ENCODE measurements at regions of chr19 and their contacts with region 1.

Region 1: DNA sequence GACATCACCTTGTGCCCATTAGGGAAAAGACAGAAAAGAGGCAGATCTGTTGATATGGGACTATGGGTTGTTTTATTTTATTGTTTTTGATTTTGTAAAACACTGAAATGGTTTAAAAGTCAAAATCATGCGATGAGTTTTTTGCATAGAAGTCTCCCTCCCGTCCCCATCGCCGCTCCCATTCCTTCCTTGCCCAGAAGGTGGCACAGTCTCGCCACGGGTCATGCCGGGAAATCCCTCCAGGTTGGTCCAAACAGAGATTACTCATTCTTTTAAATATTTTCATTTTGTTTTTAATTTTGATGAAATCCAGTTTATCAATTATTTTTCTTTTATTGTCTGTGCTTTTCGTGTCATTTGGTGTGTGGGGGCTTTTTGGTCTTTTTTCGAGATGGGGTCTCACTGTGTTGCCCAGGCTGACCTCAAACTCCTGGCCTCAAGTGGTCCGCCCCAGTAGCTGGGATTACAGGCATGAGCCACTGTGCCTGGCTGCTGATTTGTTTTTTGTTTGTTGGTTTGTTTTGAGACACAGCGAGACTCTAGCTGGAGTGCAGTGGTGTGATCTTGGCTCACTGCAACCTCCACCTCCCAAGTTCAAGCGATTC is 9.2 kb downstream of the PGPEP1 start:
- DNase-seq: peak; percentile 39
- H3K4me3 ChIP-seq: no peak overlapping the region
- H3K27ac ChIP-seq: no peak overlapping the region
- H3K4me1 ChIP-seq: peaks cover 10% of the 10 kb centered on the region
- H3K27me3 ChIP-seq: no peaks in the 10 kb centered on the region
- CTCF ChIP-seq: peak; percentile 93 to 95

Region 2: DNA sequence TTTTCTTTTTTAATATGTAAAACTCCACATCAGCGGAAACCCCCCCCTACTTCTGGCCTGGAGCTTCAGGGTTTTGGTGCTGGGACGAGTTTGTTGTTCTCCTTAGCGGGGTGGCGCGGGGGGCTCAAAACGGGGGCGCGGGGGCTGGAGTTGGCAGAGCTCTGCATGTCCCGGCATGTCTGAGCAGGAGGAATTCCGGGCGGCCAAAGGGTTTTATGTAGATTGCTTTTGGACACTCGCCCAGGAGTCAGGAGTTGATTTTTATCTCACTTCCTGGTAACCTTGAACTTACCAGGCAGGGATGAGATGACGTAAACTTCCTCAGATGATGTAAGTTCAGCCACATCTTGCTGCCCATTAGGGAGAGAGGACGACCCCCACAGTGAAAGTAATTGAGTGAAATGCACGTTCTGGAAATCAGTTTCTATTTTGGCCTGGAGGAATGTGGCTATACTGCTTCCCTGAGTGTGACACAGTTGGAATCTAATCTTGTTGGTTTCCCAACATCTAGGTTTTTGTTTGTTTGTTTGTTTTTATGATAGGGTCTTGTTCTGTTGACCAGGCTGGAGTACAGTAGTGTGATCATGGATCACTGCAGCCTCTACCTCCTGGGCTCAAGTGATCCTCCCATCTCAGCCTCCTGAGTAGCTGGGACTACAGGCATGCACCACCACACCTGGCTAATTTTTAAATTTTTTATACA is 15.4 kb after region 1 on chr19:
- CTCF ChIA-PET with region 1: no interaction called
- dilution Hi-C with region 1: no loop called
- in situ Hi-C with region 1: no loop called
- intact Hi-C with region 1: loop called (anchors 2 kb)
- DNase-seq: peak; percentile 96
- H3K4me3 ChIP-seq: no peak overlapping the region
- H3K27ac ChIP-seq: peak overlapping the region; percentile 80
- H3K4me1 ChIP-seq: peaks cover 19% of the 10 kb centered on the region
- H3K27me3 ChIP-seq: no peaks in the 10 kb centered on the region
- CTCF ChIP-seq: no peak

Region 3: GRCh38 chr19:18385675-18386542 is 36.3 kb after region 1 on chr19 and contains the start of gene GDF15:
- CTCF ChIA-PET with region 1: interaction called, 3 read pairs
- dilution Hi-C with region 1: no loop called
- in situ Hi-C with region 1: no loop called
- intact Hi-C with region 1: loop called (anchors 1 kb)
- DNase-seq: peak; percentile 69
- H3K4me3 ChIP-seq: peak within 1 kb of the TSS; percentile 57 to 64 (median 60)
- H3K27ac ChIP-seq: no peak within 1 kb of the TSS
- H3K4me1 ChIP-seq: peaks cover 26% of the 10 kb centered on the region
- H3K27me3 ChIP-seq: no peaks in the 10 kb centered on the region
- CTCF ChIP-seq: peak; percentile 67 to 87
- total RNA-seq, gene GDF15: 78.7 to 93.2 TPM

Region 4: GRCh38 chr19:18408053-18408476 is 58.4 kb after region 1 on chr19:
- CTCF ChIA-PET with region 1: no interaction called
- dilution Hi-C with region 1: no loop called
- in situ Hi-C with region 1: loop called (anchors 5 to 10 kb)
- intact Hi-C with region 1: loop called (anchors 1 kb)
- DNase-seq: no peak
- H3K4me3 ChIP-seq: no peak overlapping the region
- H3K27ac ChIP-seq: no peak overlapping the region
- H3K4me1 ChIP-seq: peaks cover 3% of the 10 kb centered on the region
- H3K27me3 ChIP-seq: no peaks in the 10 kb centered on the region
- CTCF ChIP-seq: peak; percentile 20 to 38

Region 5: DNA sequence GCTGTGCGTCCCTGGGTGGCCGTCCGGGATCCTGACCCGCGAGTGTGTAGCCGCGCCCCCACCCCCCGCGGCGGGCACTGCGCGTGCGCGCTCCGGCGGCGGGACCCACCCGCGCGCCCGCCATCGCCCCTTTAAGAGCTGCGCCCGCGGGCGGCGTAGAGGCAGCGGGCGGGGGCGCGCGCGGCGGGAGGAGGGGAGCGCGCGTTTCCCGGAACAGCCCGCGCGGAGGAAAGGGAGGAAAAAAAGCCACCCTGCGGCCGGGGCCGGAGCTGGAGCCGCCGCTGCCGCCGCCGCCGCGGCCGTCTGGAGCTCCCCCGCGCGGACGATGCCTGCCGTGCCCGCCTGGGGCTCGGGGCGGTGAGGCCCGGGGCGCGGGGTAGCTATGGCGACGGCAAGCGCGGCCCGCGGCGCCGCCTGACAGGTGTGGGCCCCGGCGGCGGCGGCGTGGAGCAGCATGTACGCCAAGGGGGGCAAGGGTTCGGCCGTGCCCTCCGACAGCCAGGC is 69.6 kb after region 1 on chr19 and contains the start of gene SSBP4:
- CTCF ChIA-PET with region 1: no interaction called
- dilution Hi-C with region 1: no loop called
- in situ Hi-C with region 1: loop called in 1 of 2 experiments (anchors 5 kb)
- intact Hi-C with region 1: no loop called
- DNase-seq: peak; percentile 68
- H3K4me3 ChIP-seq: peak within 1 kb of the TSS; percentile 59 to 69 (median 60)
- H3K27ac ChIP-seq: no peak within 1 kb of the TSS
- H3K4me1 ChIP-seq: peaks cover 27% of the 10 kb centered on the region
- H3K27me3 ChIP-seq: no peaks in the 10 kb centered on the region
- CTCF ChIP-seq: peak in 1 of 2 donors; percentile 31
- total RNA-seq, gene SSBP4: 34.0 to 41.0 TPM

Region 6: DNA sequence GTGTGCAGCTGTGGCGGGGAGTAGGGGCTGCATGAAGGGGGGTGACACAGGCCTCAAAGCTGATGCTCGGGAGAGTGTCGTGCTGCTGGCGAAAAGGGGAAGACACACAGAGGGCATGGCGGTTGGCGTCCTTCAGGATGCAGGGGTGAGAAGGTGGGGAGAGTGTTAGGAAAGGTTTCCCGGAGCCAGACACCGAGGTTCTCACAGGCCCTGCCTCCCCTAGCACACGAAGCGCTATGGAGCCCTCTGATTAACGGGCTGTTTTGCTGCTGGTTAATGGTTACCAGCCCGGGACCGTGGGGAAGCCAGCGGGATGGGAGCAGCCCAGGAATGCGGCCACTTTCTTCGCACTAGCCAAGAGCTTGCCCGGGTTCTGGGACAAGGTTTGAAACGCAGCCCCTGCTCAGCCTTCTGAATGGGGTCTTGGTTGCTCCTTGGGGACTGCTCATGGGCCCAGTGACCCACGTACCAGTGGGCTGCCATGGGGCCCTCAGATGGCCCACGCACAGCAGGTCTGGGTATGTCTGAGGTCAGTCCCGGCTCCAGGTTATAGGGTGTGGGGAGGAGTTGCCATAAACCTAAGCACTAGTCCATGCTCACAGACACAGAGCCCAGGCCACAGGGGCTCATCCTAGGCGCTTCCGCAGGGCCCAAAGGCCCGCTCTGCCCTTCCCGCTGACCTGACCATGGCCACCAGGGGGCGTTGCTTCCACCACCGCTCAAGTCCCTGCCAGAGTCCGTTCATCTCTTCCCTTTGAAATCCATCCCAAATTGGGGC is 119.6 kb after region 1 on chr19:
- CTCF ChIA-PET with region 1: no interaction called
- dilution Hi-C with region 1: no loop called
- in situ Hi-C with region 1: no loop called
- intact Hi-C with region 1: loop called (anchors 5 kb)
- DNase-seq: no peak
- H3K4me3 ChIP-seq: no peak overlapping the region
- H3K27ac ChIP-seq: no peak overlapping the region
- H3K4me1 ChIP-seq: peaks cover 8% of the 10 kb centered on the region
- H3K27me3 ChIP-seq: no peaks in the 10 kb centered on the region
- CTCF ChIP-seq: peak; percentile 68 to 83